ENCODE measurements at regions of chr20 and their contacts with region 1.

Region 1: DNA sequence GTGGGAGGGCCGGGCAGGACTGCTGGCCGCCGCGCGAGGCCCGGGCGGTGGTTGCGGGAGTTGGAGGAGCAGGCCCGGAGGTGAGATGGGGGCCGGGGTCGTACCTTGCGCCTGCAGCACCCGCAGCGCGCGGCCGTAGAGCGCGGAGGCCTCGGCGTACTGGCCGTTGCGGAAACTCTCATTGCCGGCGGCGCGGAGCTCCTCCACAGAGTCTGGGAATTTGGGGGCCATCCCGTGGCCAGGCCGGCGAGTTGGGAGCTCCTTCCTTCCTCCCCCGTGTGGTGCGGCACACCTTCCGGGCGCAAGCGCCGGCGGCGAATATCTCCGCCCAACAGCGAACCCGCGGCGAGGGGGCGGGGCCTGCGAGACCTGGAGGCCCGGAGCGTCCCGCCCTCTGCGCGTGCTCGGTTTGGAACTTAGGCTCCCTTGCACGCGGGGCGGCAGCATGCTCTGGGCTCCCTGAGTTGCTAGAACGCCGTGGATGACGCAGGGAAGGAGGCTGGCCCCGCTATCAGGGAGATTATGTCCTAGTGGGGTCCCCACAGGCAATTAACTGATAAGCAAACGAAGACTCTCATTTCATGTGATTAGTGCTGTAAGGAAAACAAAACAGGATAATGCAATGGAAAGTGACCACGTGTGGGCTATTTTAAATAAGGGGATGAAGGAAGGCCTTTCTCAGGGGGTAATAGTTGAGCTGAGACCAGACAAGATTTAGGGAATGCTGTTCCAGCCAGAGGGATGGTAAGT is at the start of gene TOMM34:
- DNase-seq: peak; percentile 98
- ATAC-seq: peak; percentile 91
- H3K4me3 Mint-ChIP-seq: peak within 1 kb of the TSS; percentile 84
- H3K27ac Mint-ChIP-seq: peak within 1 kb of the TSS; percentile 99
- H3K4me1 Mint-ChIP-seq: peaks cover 72% of the 10 kb centered on the region
- H3K27me3 Mint-ChIP-seq: no peaks in the 10 kb centered on the region
- CTCF ChIP-seq: no peak
- total RNA-seq, gene TOMM34: 60.5 to 62.4 TPM

Region 2: DNA sequence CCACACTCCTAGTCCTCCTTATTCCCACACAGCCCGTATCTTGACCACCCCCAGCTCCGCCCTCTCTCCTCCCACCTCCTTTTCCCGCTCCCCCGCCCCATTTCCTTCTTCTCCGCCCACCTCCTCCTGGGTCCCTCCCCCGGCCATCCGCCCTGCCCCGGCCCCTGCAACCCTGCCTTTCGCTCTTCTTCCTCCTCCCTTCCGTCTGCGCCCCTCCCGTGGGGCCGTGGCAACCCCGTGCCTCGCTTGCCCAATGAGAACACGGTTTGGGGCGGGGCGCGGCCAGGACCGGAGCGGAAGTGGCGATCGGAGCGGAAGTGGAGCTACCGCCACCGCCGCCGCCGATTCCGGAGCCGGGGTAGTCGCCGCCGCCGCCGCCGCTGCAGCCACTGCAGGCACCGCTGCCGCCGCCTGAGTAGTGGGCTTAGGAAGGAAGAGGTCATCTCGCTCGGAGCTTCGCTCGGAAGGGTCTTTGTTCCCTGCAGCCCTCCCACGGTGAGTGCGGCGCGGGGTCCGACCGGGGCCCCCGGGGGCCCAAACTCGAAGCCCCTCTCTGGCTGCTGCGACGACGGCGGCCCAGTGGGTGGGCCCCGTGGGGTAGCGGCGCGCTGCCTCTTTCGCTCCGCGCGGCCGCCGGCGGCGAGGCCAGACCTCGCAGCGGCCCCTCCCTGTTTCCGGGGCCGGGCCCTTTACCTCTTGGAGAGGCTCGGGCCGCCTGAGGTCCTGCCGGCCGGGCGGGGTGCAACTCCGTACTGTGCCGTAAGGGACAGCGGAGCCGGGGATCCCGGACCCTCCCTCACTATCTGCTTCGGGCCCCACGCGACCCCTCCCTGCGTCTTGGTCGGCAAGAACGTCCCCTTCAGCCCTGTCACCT is 74.6 kb before region 1 on chr20 and contains the start of gene YWHAB:
- CTCF ChIA-PET with region 1: no interaction called
- POLR2A ChIA-PET with region 1: interaction called, 5 read pairs
- intact Hi-C with region 1: loop called (anchors 5 kb)
- DNase-seq: peak; percentile 99
- ATAC-seq: peak; percentile 98
- H3K4me3 Mint-ChIP-seq: peak within 1 kb of the TSS; percentile 90
- H3K27ac Mint-ChIP-seq: peak within 1 kb of the TSS; percentile 92
- H3K4me1 Mint-ChIP-seq: peaks cover 44% of the 10 kb centered on the region
- H3K27me3 Mint-ChIP-seq: no peaks in the 10 kb centered on the region
- CTCF ChIP-seq: no peak
- total RNA-seq, gene YWHAB: 220 to 226 TPM

Region 3: GRCh38 chr20:44942264-44942973 is 17.9 kb before region 1 on chr20:
- CTCF ChIA-PET with region 1: interaction called, 3 read pairs
- POLR2A ChIA-PET with region 1: interaction called, 16 read pairs
- intact Hi-C with region 1: no loop called
- DNase-seq: no peak
- ATAC-seq: no peak
- H3K4me3 Mint-ChIP-seq: no peak overlapping the region
- H3K27ac Mint-ChIP-seq: peak overlapping the region; percentile 30
- H3K4me1 Mint-ChIP-seq: peaks cover 2% of the 10 kb centered on the region
- H3K27me3 Mint-ChIP-seq: no peaks in the 10 kb centered on the region
- CTCF ChIP-seq: no peak

Region 4: GRCh38 chr20:44948107-44948506 is 12.2 kb before region 1 on chr20:
- CTCF ChIA-PET with region 1: interaction called, 9 read pairs
- POLR2A ChIA-PET with region 1: interaction called, 35 read pairs
- intact Hi-C with region 1: no loop called
- DNase-seq: no peak
- ATAC-seq: no peak
- H3K4me3 Mint-ChIP-seq: no peak overlapping the region
- H3K27ac Mint-ChIP-seq: no peak overlapping the region
- H3K4me1 Mint-ChIP-seq: peaks cover 9% of the 10 kb centered on the region
- H3K27me3 Mint-ChIP-seq: no peaks in the 10 kb centered on the region
- CTCF ChIP-seq: no peak

Region 5: GRCh38 chr20:44979090-44979621 is 18.9 kb after region 1 on chr20:
- CTCF ChIA-PET with region 1: interaction called, 4 read pairs
- POLR2A ChIA-PET with region 1: interaction called, 55 read pairs
- intact Hi-C with region 1: no loop called
- DNase-seq: peak; percentile 86
- ATAC-seq: peak; percentile 82
- H3K4me3 Mint-ChIP-seq: peak overlapping the region; percentile 50
- H3K27ac Mint-ChIP-seq: peak overlapping the region; percentile 96
- H3K4me1 Mint-ChIP-seq: peaks cover 83% of the 10 kb centered on the region
- H3K27me3 Mint-ChIP-seq: no peaks in the 10 kb centered on the region
- CTCF ChIP-seq: no peak

Measured in activated CD8-positive, alpha-beta T cell treated with anti-CD3 and anti-CD28 coated beads for 36 hours (primary cell).